ENCODE measurements at regions of chr9 and their contacts with region 1.

Region 1: GRCh38 chr9:123238365-123238764 is 30.0 kb downstream of the STRBP start:
- DNase-seq: no peak
- H3K4me3 ChIP-seq: no peak overlapping the region
- H3K27me3 ChIP-seq: no peaks in the 10 kb centered on the region
- CTCF ChIP-seq: no peak

Region 2: DNA sequence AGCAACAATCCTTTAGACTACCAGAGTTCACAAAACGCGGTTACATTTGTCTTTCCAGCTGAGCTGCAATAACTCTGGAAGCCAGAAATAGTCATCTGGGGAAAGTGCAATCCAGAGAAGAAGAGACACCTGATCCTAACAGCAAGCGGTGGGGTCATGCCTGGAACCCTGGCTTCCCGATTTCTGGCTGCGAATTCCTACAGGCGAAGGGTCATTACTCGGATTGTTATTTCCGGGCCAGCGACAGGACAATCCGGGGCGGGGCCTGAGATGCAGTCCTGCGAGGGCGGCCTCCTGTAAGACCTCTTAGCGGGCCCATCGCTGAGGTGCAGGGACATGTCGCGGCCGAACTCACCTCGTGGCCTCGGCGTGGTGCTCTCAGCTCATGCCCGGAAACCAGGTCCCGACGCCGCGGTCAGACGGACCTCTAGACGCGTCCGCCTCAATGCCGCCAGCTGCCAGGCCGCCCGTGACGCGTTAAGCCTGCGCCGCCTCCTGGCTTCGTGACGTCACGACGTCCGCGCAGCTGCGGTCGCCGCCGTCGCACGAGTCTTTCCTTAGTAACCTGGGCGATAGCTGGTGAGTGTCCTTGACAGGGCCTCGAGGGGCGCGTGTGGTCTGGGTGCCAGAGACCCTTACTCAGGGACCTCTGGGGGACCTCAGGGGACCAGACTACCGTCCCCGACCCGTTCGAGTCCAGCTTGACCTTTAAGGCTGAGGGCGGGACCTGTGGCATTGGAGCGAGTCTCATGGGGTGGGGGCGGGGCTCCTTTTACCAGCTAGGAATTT is 973.8 kb before region 1 on chr9 and contains the starts of genes MRRF and RBM18:
- CTCF ChIA-PET with region 1: no interaction called
- POLR2A ChIA-PET with region 1: interaction called, 13 read pairs
- DNase-seq: peak; percentile 47
- H3K4me3 ChIP-seq: peak within 1 kb of the TSS; percentile 71
- H3K27me3 ChIP-seq: no peaks in the 10 kb centered on the region
- CTCF ChIP-seq: no peak
- polyA plus RNA-seq, gene MRRF: 35.1 and 51.2 TPM in 2 replicates
- polyA plus RNA-seq, gene RBM18: 14.7 and 29.3 TPM in 2 replicates

Region 3: DNA sequence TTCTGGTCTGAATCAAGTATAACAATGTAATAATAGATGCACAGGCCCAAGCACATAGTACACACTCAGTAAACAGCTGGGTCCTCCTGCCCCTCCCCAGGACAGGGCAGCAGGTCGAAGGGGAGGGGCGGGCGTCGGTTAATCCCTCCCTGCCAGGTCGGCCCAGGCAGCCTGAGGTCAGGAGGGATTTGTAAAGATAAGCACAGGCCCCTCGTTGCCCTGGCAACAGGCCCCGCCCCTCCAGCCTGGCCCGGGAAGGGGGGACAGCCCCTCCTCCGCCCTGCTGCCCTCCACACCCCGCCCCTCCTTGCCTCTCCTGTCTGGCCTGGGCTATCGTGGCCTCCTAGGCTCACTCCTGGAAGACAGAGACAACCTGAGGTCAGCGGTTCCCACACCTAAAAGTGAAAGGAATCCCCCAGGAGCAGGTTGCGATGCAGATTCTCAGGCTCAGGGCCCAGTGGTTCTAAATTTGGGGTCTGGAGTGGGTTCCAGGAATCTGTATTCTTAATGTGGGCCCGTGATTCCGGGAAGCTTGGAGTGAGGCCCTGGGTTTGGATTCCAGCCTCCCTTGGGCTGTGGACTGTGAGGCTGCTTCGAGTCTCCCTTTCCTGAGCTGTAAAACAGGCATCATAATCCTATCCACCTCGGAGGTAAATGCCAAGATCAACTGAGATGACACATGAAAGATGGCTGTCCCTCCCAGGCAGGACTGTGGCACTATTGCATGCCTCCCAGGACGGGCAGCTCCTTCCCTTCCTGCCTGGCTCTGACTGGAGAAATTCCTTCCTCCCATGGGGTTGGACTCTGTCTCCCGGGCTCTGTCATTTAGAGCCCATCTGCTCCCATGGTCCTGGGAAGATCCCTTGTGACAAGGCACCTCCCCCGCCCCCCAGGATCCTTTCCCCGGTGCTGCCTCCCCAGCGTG is 122.1 kb after region 1 on chr9:
- CTCF ChIA-PET with region 1: no interaction called
- POLR2A ChIA-PET with region 1: no interaction called
- DNase-seq: no peak
- H3K4me3 ChIP-seq: no peak overlapping the region
- H3K27me3 ChIP-seq: peaks cover 12% of the 10 kb centered on the region
- CTCF ChIP-seq: no peak

Region 4: GRCh38 chr9:123373946-123374345 is 135.6 kb after region 1 on chr9:
- CTCF ChIA-PET with region 1: no interaction called
- POLR2A ChIA-PET with region 1: no interaction called
- DNase-seq: no peak
- H3K4me3 ChIP-seq: no peak overlapping the region
- H3K27me3 ChIP-seq: peaks cover 29% of the 10 kb centered on the region
- CTCF ChIP-seq: no peak